Psoas muscle (tissue), 8 donors: ENCODE measurements at regions of chr17 and their contacts with region 1.

Region 1: DNA sequence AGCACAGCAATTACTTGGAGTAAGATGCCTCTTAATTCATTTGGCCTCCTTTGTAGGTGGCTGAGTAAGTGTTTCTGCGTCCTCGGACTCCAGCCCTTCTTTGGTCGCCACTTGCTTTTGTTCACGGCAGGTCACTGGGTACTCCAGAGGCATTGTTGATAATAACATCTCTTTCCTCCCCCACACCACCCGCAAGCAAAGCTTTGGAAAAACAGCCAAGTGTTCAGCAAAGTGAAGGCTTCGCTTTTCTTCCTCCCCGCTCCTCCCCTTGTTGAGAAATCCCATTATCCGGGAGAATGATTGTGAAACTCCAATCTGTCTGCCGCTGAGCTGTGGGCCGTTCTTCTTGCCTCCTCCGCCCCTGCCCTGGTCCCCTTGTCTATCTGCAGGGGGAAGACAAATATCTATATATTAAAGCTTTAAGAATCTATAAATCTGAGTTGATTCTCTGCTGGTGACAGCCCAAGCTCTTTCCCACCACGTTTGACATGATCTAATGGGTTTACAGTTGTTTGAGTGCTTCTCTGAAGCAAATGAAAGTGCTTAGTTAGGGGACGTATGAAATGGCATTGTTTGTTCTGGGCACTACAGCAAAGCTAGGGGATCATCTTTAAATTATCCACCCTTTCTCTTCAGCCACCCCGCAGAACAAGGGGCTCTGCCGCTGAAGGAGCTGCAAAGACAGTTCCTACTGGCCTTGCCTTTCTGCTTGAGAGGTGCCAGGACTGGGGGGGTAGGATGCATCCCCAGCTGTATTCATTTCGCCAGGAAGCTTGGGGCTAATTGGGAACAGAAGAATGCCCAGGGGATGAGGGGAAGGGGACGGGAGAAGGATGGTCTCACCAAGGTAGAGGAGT is 167.1 kb downstream of the CCDC182 start:
- DNase-seq: peak; percentile 40 to 70
- ATAC-seq: peak; percentile 27 to 81 (median 73)
- H3K4me3 ChIP-seq: peak overlapping the region; percentile 46
- H3K27ac ChIP-seq: peak overlapping the region; percentile 65
- H3K4me1 ChIP-seq: peaks cover 42% of the 10 kb centered on the region
- H3K27me3 ChIP-seq: no peaks in the 10 kb centered on the region
- CTCF ChIP-seq: no peak

Region 2: GRCh38 chr17:57284984-57285646 is 292.9 kb before region 1 on chr17:
- intact Hi-C with region 1: loop called in 1 of 2 experiments (anchors 10 kb)
- DNase-seq: no peak
- ATAC-seq: no peak
- H3K4me3 ChIP-seq: no peak overlapping the region
- H3K27ac ChIP-seq: peak overlapping the region; percentile 91
- H3K4me1 ChIP-seq: peaks cover 76% of the 10 kb centered on the region
- H3K27me3 ChIP-seq: no peaks in the 10 kb centered on the region
- CTCF ChIP-seq: no peak

Region 3: DNA sequence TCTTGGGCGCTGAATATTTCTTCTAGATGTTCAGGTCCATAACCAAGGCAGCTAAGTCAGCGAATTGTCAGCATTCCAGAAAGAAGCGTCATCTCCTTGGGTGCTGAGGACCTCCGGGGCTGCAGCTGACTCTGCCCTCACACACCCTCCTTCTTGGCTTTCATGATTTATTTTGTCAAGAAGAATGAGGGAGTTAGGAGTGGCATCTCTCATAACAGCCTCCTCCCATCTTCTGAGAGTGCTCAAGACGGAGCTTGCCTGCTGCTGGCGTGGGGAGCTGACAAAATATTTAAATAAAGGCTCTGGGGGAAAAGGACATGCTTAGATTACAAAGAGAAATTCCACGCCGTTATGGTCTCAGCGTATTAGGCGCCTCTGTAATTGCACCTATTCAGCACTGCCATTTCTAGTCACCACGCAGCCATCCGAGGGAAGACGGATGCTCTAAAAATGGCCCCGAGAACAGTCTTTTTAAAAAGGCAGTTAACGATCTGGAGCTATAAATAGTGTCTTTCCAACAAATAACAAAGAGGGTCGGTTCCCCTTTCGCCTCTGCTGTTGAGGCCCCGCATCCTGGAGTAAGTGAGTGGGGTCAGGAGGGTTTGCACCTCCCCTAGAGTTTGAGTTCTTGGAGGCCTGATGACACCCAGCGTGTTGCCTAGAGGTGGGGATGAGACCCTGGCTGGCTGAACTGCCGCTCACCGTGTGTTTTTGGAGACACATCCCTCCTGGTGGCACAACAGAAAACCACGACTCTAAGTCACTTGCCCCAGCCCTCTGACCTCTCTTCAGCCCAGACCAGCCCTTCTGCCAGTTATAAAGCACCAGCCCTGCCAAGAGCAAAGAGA is 19.9 kb before region 1 on chr17:
- intact Hi-C with region 1: no loop called
- DNase-seq: no peak
- ATAC-seq: no peak
- H3K4me3 ChIP-seq: no peak overlapping the region
- H3K27ac ChIP-seq: peak overlapping the region; percentile 41
- H3K4me1 ChIP-seq: peaks cover 40% of the 10 kb centered on the region
- H3K27me3 ChIP-seq: no peaks in the 10 kb centered on the region
- CTCF ChIP-seq: no peak